PC-9 (cell line): ENCODE measurements at regions of chr9 and their contacts with region 1.

Region 1: DNA sequence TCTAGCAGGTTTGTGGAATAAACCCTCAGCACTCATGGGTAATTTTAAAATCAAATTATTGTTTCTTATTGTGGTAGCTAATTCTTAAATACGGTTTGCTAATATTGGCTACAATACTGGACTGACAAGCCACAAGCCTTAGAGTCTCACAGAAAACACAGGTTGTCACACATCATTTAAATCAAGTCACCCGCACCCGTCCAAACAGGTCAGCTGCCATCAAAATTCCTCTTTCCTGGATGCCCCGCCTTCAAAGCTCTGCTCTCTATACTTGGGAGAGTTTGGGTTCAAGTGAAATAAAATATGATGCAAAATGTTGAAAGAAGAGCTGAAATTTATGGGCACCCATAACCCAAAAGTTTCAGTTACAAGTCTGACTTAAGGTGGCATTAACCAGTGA is 12.3 kb upstream of the SUSD1 start:
- DNase-seq: no peak
- H3K4me3 ChIP-seq: no peak overlapping the region
- H3K27ac ChIP-seq: no peak overlapping the region
- H3K4me1 ChIP-seq: no peaks in the 10 kb centered on the region
- H3K27me3 ChIP-seq: no peaks in the 10 kb centered on the region
- CTCF ChIP-seq: no peak

Region 2: GRCh38 chr9:112140936-112141335 is 46.5 kb before region 1 on chr9:
- CTCF ChIA-PET with region 1: no interaction called
- POLR2A ChIA-PET with region 1: no interaction called
- intact Hi-C with region 1: no loop called
- DNase-seq: peak in 1 of 2 experiments; percentile 55
- H3K4me3 ChIP-seq: no peak overlapping the region
- H3K27ac ChIP-seq: peak overlapping the region; percentile 47
- H3K4me1 ChIP-seq: peaks cover 35% of the 10 kb centered on the region
- H3K27me3 ChIP-seq: no peaks in the 10 kb centered on the region
- CTCF ChIP-seq: no peak

Region 3: GRCh38 chr9:112158656-112159367 is 28.6 kb before region 1 on chr9:
- CTCF ChIA-PET with region 1: no interaction called
- POLR2A ChIA-PET with region 1: interaction called, 10 read pairs
- intact Hi-C with region 1: no loop called
- DNase-seq: no peak
- H3K4me3 ChIP-seq: no peak overlapping the region
- H3K27ac ChIP-seq: no peak overlapping the region
- H3K4me1 ChIP-seq: no peaks in the 10 kb centered on the region; the same call in 1 of the 2 replicates
- H3K27me3 ChIP-seq: no peaks in the 10 kb centered on the region
- CTCF ChIP-seq: no peak

Region 4: DNA sequence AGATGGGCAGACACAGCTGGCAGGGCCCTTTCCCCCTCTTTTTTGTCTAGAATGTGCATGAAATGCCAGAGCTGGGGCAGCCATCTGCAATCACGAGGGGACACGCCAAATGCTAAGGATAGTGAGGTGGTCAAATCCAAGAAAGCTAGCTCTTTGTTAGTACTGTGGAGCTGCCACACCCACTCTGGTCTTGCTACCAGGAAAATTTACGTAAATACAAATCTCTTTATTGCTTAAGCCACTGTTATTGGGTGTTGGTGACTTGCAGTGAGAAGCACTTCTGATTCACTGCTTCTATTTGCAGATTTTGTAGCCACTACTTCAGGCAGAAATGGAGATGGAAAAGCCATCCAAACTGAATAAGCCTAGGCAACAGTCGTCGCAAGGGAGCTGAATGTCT is 13.3 kb after region 1 on chr9:
- CTCF ChIA-PET with region 1: interaction called, 11 read pairs
- POLR2A ChIA-PET with region 1: interaction called, 4 read pairs
- intact Hi-C with region 1: no loop called
- DNase-seq: no peak
- H3K4me3 ChIP-seq: no peak overlapping the region
- H3K27ac ChIP-seq: no peak overlapping the region
- H3K4me1 ChIP-seq: no peaks in the 10 kb centered on the region
- H3K27me3 ChIP-seq: no peaks in the 10 kb centered on the region
- CTCF ChIP-seq: no peak

Region 5: DNA sequence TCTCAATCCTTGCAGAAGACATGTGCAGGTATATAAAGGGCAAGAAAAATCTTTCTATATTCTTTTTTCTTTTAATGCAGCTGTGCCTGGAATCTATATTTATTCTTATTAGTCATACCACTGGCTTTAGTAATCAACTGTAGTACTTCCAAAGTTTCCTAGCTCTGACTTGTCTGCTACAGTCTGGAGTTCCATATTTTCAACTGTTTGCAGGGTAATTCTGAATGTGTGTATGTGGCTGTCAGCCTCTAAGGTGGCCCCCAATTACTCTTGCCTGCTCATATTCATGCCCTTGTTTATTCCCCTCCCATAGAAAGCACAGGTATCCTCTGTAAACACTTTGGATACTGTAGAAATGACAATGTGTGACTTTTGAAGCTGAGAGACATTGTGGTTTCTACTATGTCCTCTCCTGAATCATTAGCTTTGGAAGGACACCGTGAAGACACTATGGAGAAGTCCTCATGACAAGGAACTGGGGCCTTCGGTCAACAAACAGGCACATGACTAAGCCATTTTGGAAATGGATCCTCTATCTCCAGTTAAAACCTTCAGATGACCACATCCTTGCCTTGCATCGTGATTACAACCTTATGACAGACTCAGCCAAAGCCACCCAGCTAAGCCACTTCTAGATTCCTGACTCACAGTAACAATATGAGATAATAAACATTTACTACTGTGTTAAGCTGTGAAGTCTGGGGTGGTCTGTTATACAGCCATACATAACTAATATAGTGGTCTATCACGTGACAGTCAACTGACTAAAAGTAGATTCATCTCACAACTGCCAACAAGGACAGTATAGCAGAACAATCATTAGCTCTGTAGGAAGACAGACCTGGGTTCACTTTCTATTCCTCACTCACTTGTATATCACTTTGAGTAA is 37.2 kb after region 1 on chr9:
- CTCF ChIA-PET with region 1: no interaction called
- POLR2A ChIA-PET with region 1: interaction called, 11 read pairs
- intact Hi-C with region 1: no loop called
- DNase-seq: no peak
- H3K4me3 ChIP-seq: no peak overlapping the region
- H3K27ac ChIP-seq: peak overlapping the region; percentile 28; the same call in 1 of the 2 replicates
- H3K4me1 ChIP-seq: no peaks in the 10 kb centered on the region
- H3K27me3 ChIP-seq: no peaks in the 10 kb centered on the region
- CTCF ChIP-seq: no peak

Region 6: GRCh38 chr9:112283582-112284253 is 96.3 kb after region 1 on chr9:
- CTCF ChIA-PET with region 1: no interaction called
- POLR2A ChIA-PET with region 1: no interaction called
- intact Hi-C with region 1: no loop called
- DNase-seq: no peak
- H3K4me3 ChIP-seq: no peak overlapping the region
- H3K27ac ChIP-seq: no peak overlapping the region
- H3K4me1 ChIP-seq: no peaks in the 10 kb centered on the region
- H3K27me3 ChIP-seq: no peaks in the 10 kb centered on the region
- CTCF ChIP-seq: no peak

Region 7: GRCh38 chr9:112520656-112521055 is 333.3 kb after region 1 on chr9:
- CTCF ChIA-PET with region 1: no interaction called
- POLR2A ChIA-PET with region 1: no interaction called
- intact Hi-C with region 1: no loop called
- DNase-seq: no peak
- H3K4me3 ChIP-seq: no peak overlapping the region
- H3K27ac ChIP-seq: no peak overlapping the region
- H3K4me1 ChIP-seq: no peaks in the 10 kb centered on the region
- H3K27me3 ChIP-seq: no peaks in the 10 kb centered on the region
- CTCF ChIP-seq: no peak